HCT116 (cell line): ENCODE measurements at regions of chr18 and their contacts with region 1.

Region 1: DNA sequence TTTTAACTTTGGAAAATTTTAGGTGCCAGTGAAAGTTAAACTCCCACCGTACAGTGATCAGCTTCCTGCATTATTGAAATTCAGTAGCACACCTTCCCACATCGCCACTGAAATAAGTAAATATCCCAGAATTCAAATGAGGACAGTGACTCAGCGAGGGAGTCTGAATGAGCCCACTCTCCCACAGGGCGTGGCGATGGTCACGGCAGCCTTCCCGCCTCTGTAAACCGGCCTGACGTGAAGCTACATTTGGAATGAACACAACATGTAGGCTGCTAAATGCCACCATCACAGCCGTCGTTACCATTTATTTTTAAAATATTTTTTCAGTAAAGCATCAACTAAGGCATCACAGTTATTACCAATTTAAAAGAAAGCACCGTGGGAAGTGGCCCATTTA is 220.6 kb downstream of the L3MBTL4 start:
- DNase-seq: no peak
- ATAC-seq: no peak
- H3K4me3 ChIP-seq: no peak overlapping the region
- H3K27ac ChIP-seq: no peak overlapping the region
- H3K4me1 ChIP-seq: no peaks in the 10 kb centered on the region
- H3K27me3 ChIP-seq: no peaks in the 10 kb centered on the region
- CTCF ChIP-seq: no peak
- POLR2A ChIP-seq: no peak
- RAD21 ChIP-seq: no peak

Region 2: GRCh38 chr18:6249170-6249569 is 55.0 kb after region 1 on chr18:
- CTCF ChIA-PET with region 1: no interaction called
- POLR2A ChIA-PET with region 1: no interaction called
- RAD21 ChIA-PET with region 1: no interaction called
- intact Hi-C with region 1: loop called (anchors 10 kb)
- DNase-seq: no peak
- ATAC-seq: no peak
- H3K4me3 ChIP-seq: no peak overlapping the region
- H3K27ac ChIP-seq: no peak overlapping the region
- H3K4me1 ChIP-seq: no peaks in the 10 kb centered on the region
- H3K27me3 ChIP-seq: no peaks in the 10 kb centered on the region
- CTCF ChIP-seq: no peak
- POLR2A ChIP-seq: no peak
- RAD21 ChIP-seq: no peak

Region 3: GRCh38 chr18:6509832-6510231 is 315.7 kb after region 1 on chr18:
- CTCF ChIA-PET with region 1: no interaction called
- POLR2A ChIA-PET with region 1: no interaction called
- RAD21 ChIA-PET with region 1: no interaction called
- intact Hi-C with region 1: no loop called
- DNase-seq: no peak
- ATAC-seq: no peak
- H3K4me3 ChIP-seq: no peak overlapping the region
- H3K27ac ChIP-seq: no peak overlapping the region
- H3K4me1 ChIP-seq: no peaks in the 10 kb centered on the region
- H3K27me3 ChIP-seq: no peaks in the 10 kb centered on the region
- CTCF ChIP-seq: no peak
- POLR2A ChIP-seq: no peak
- RAD21 ChIP-seq: no peak